AG04450 (cell line): ENCODE measurements at regions of chr5 and their contacts with region 1.

Region 1: GRCh38 chr5:92687821-92688722 is 892.9 kb downstream of the NR2F1-AS1 start:
- DNase-seq: peak; percentile 38
- H3K4me3 ChIP-seq: no peak overlapping the region
- H3K27ac ChIP-seq: no peak overlapping the region
- H3K27me3 ChIP-seq: no peaks in the 10 kb centered on the region
- CTCF ChIP-seq: peak; percentile 67

Region 2: GRCh38 chr5:92662741-92663140 is 25.3 kb before region 1 on chr5:
- CTCF ChIA-PET with region 1: interaction called, 12 read pairs
- POLR2A ChIA-PET with region 1: no interaction called
- DNase-seq: no peak
- H3K4me3 ChIP-seq: no peak overlapping the region
- H3K27ac ChIP-seq: no peak overlapping the region
- H3K27me3 ChIP-seq: no peaks in the 10 kb centered on the region
- CTCF ChIP-seq: no peak

Region 3: DNA sequence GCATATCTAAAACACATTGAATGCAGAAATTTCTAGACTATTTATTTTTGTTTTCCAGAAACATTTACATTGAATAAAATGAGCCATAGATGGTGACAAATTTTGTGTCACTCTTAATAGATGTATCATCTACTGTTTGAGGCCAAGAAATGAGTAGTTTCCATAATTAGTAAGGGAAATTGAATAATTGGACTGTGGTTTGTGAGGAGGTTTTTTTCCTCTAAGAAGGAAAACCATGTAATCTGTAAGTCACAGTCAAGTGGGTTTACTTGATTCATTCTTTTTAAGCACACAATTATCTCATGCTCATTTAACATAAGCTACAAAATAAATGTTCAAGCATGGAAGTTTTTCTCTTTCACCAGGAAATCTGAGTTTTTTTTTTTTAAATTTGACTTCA is 16.5 kb after region 1 on chr5:
- CTCF ChIA-PET with region 1: interaction called, 24 read pairs
- POLR2A ChIA-PET with region 1: no interaction called
- DNase-seq: no peak
- H3K4me3 ChIP-seq: no peak overlapping the region
- H3K27ac ChIP-seq: no peak overlapping the region
- H3K27me3 ChIP-seq: no peaks in the 10 kb centered on the region
- CTCF ChIP-seq: no peak

Region 4: GRCh38 chr5:93208141-93208751 is 520.2 kb after region 1 on chr5:
- CTCF ChIA-PET with region 1: no interaction called
- POLR2A ChIA-PET with region 1: no interaction called
- DNase-seq: no peak
- H3K4me3 ChIP-seq: no peak overlapping the region
- H3K27ac ChIP-seq: no peak overlapping the region
- H3K27me3 ChIP-seq: no peaks in the 10 kb centered on the region
- CTCF ChIP-seq: no peak